Activated CD4-positive, alpha-beta T cell treated with anti-CD3 and anti-CD28 coated beads for 36 hours (primary cell): ENCODE measurements at regions of chr7 and their contacts with region 1.

Region 1: DNA sequence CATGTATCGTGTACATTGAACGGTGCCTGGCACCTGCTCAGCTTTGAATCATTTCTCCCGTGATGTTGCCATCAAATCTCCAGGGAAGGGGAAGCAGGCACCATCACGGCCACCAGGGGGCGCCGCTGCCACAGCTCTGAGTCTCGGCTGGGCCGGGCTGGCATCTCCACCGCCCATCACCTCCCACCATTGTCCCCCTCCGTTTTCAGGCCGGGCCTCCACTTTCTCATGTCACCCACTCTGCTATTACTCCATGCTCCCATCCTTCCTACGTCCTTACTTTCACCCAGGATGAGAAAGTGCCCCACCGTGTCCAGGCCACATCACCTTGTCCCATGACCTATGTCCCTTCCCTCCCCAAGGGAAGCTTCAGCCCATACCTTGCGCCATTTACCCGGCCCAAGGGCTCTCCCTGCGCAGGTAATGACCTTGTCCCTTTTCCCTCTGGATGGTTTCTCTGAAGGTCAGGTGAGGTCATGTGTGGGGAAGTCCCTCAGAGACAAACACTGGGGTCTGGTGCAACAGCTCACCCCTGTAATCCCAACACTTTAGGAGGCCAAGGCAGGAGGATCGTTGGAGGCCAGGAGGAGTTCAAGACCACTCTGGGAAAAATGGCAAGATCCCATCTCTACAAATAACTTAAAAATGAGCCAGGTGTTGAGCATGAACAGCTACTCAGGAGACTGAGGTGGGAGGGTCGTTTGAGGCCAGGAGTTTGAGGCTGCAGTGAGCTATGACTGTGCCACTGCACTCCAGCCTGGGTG is 31.8 kb upstream of the OCM2 start:
- DNase-seq: peak; percentile 91
- ATAC-seq: peak; percentile 96
- H3K4me3 Mint-ChIP-seq: no peak overlapping the region
- H3K27ac Mint-ChIP-seq: no peak overlapping the region
- H3K4me1 Mint-ChIP-seq: peaks cover 4% of the 10 kb centered on the region
- H3K27me3 Mint-ChIP-seq: peaks cover 6% of the 10 kb centered on the region

Region 2: GRCh38 chr7:97373736-97374135 is 648.0 kb before region 1 on chr7:
- CTCF ChIA-PET with region 1: no interaction called
- POLR2A ChIA-PET with region 1: no interaction called
- intact Hi-C with region 1: no loop called
- DNase-seq: no peak
- ATAC-seq: no peak
- H3K4me3 Mint-ChIP-seq: no peak overlapping the region
- H3K27ac Mint-ChIP-seq: no peak overlapping the region
- H3K4me1 Mint-ChIP-seq: no peaks in the 10 kb centered on the region
- H3K27me3 Mint-ChIP-seq: no peaks in the 10 kb centered on the region

Region 3: GRCh38 chr7:97971990-97972943 is 49.5 kb before region 1 on chr7:
- CTCF ChIA-PET with region 1: no interaction called
- POLR2A ChIA-PET with region 1: interaction called, 10 read pairs
- intact Hi-C with region 1: no loop called
- DNase-seq: peak; percentile 93
- ATAC-seq: peak; percentile 97
- H3K4me3 Mint-ChIP-seq: peak overlapping the region; percentile 98
- H3K27ac Mint-ChIP-seq: peak overlapping the region; percentile 97
- H3K4me1 Mint-ChIP-seq: peaks cover 19% of the 10 kb centered on the region
- H3K27me3 Mint-ChIP-seq: no peaks in the 10 kb centered on the region

Region 4: DNA sequence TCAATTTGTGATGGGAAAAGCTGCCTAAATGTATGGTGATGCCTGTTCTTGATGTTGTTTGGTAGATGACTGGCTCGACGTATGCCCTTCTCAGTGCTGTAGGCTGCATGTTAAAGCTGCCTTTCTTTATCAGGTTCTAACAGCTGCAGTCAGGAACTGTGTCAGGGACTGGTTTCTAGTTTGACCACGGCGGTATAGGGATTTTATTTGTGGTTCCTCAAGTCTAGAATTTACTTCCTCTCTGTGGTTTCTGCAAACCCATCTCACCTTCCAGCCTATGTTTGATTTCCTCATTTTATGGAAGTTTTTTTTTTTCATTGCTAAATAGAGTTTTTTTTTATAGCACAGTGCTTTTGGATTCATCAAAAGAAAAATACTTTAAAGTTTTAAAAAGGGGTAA is 111.4 kb after region 1 on chr7:
- CTCF ChIA-PET with region 1: interaction called, 11 read pairs
- POLR2A ChIA-PET with region 1: no interaction called
- intact Hi-C with region 1: no loop called
- DNase-seq: peak; percentile 19
- ATAC-seq: peak; percentile 54
- H3K4me3 Mint-ChIP-seq: no peak overlapping the region
- H3K27ac Mint-ChIP-seq: no peak overlapping the region
- H3K4me1 Mint-ChIP-seq: peaks cover 50% of the 10 kb centered on the region
- H3K27me3 Mint-ChIP-seq: no peaks in the 10 kb centered on the region

Region 5: DNA sequence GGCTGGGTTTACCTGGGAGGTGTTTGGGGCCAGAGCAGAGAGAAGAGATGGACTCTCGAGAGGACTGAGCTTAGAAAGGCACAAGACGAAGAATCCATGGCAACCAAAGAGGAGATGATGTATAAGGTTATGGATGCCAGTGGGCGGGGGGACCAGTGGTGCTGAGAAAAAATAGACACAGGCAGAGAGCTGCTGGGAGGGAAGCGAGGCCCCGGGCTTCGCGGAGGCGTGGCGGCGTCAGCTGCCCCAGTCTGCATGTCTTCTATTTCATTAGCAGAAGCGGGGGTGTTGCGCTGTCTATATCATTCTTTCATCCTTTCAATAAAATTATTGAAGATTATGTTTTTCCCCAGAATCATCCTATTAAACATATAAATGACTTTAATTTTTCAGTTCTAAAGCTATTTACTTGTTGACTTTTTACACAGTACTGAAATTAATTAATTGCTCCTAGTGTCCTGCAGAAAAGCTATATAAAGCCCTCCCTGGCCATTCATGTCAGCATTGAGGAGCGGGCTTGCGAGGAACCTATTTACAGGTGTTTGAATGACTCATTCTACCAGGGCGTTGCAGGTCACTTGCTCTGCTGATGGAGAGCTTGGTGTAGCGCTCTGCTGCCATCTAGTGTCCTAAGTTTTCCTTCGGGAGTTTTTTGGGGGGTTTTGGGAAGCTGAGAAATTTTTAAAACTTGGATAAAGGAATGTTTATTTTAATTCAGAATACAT is 146.6 kb after region 1 on chr7:
- CTCF ChIA-PET with region 1: interaction called, 172 read pairs
- POLR2A ChIA-PET with region 1: interaction called, 3 read pairs
- intact Hi-C with region 1: loop called (anchors 1 kb)
- DNase-seq: peak; percentile 68
- ATAC-seq: peak; percentile 68
- H3K4me3 Mint-ChIP-seq: no peak overlapping the region
- H3K27ac Mint-ChIP-seq: no peak overlapping the region
- H3K4me1 Mint-ChIP-seq: peaks cover 5% of the 10 kb centered on the region
- H3K27me3 Mint-ChIP-seq: no peaks in the 10 kb centered on the region

Region 6: GRCh38 chr7:98240961-98241674 is 219.3 kb after region 1 on chr7:
- CTCF ChIA-PET with region 1: interaction called, 3 read pairs
- POLR2A ChIA-PET with region 1: no interaction called
- intact Hi-C with region 1: loop called in 1 of 2 experiments (anchors 1 kb)
- DNase-seq: peak; percentile 51
- ATAC-seq: peak; percentile 36
- H3K4me3 Mint-ChIP-seq: no peak overlapping the region
- H3K27ac Mint-ChIP-seq: no peak overlapping the region
- H3K4me1 Mint-ChIP-seq: no peaks in the 10 kb centered on the region
- H3K27me3 Mint-ChIP-seq: no peaks in the 10 kb centered on the region

Region 7: GRCh38 chr7:98400542-98401340 is 379.0 kb after region 1 on chr7 and contains the start of gene BAIAP2L1:
- CTCF ChIA-PET with region 1: no interaction called
- POLR2A ChIA-PET with region 1: no interaction called
- intact Hi-C with region 1: loop called in 1 of 2 experiments (anchors 5 kb)
- DNase-seq: peak; percentile 93
- ATAC-seq: peak; percentile 89
- H3K4me3 Mint-ChIP-seq: peak within 1 kb of the TSS; percentile 21
- H3K27ac Mint-ChIP-seq: no peak within 1 kb of the TSS
- H3K4me1 Mint-ChIP-seq: peaks cover 7% of the 10 kb centered on the region
- H3K27me3 Mint-ChIP-seq: peaks cover 20% of the 10 kb centered on the region
- total RNA-seq, gene BAIAP2L1: 2.3 to 3.0 TPM

Region 8: DNA sequence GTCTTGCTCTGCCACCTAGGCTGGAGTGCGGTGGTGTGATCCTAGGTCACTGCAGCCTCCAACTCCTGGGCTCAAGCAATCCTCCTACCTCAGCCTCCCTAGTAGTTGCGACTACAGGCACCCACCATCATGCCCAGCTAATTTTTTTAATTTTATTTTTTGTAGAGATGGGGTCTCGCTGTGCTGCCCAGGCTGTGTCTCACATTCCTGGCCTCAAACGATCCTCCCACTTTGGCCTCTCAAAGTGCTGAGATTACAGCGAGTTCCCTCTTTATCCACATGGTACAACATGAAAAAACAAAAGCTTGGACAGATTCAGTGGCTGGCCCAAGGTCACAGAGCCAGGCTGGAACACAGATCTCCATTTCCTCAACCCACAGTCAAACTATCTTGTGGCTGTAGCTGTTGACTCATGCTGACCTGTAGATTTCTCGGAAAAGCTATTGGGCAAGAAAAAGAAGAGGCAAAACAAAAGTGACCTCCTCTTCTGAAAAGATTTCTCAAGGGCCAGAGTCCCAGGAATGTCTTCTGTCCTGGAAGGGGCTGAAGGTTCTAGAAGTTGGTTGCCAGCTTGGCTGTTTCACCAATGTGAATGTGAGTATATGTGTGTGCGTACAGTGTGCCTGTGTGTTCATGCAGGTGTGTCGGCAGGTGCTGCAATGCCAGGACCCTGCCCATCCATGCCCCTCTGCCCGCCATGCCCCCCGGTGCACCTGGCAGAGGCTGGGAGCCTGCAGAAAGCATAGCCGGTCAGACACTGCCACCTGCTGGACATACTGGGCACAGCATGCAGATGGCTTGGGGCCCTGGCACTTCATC is 819.6 kb after region 1 on chr7:
- CTCF ChIA-PET with region 1: no interaction called
- POLR2A ChIA-PET with region 1: no interaction called
- intact Hi-C with region 1: loop called in 1 of 2 experiments (anchors 1 kb)
- DNase-seq: peak; percentile 81
- ATAC-seq: peak; percentile 78
- H3K4me3 Mint-ChIP-seq: no peak overlapping the region
- H3K27ac Mint-ChIP-seq: no peak overlapping the region
- H3K4me1 Mint-ChIP-seq: no peaks in the 10 kb centered on the region
- H3K27me3 Mint-ChIP-seq: peaks cover 10% of the 10 kb centered on the region